PC-9 (cell line): ENCODE measurements at regions of chr19 and their contacts with region 1.

Region 1: DNA sequence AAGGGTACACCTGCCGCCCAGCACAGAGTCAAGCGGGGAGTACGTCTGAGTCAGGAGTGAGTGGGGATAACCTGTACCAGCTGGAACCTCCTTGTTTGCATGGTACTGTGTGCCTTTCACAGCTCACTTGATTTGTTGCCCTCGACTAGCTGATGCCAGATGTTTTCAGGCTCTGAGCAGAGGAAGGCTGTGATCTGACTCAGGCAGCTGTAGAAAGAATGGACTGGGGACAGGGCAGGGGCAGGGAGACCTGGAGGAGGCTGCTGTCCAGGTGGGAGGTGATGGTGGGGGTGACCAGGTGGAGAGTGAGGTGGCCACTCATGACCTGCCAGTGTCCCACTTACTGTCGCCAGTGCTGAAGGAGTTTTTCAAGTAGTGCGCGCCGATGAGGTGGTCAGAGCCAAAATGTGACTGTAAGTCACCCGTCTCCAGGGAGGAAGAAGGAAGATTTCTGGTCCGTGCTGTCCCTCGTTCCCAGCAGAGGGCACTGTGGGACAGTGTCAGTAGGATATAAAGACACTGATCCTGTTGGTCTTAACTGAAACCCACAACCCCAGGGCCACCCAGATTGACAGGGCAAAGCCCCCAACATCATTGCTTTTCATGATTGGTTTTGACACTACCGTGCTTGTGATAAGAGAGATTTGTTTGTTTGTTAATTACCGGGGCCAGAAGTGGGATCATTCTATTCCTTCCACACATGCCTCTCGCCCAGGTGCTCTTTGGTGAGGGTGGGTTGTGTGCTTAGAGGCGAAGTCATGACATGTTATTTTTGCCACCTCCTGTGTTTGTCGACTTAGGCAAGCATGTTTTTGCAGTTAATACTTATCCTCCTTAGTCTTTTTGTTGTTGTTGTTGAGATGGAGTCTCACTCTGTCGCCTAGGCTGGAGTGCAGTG is 128.4 kb downstream of the DPF1 start:
- DNase-seq: peak in 1 of 2 experiments; percentile 61
- H3K4me3 ChIP-seq: no peak overlapping the region
- H3K27ac ChIP-seq: no peak overlapping the region
- H3K4me1 ChIP-seq: no peaks in the 10 kb centered on the region
- H3K27me3 ChIP-seq: no peaks in the 10 kb centered on the region
- CTCF ChIP-seq: peak; percentile 74

Region 2: DNA sequence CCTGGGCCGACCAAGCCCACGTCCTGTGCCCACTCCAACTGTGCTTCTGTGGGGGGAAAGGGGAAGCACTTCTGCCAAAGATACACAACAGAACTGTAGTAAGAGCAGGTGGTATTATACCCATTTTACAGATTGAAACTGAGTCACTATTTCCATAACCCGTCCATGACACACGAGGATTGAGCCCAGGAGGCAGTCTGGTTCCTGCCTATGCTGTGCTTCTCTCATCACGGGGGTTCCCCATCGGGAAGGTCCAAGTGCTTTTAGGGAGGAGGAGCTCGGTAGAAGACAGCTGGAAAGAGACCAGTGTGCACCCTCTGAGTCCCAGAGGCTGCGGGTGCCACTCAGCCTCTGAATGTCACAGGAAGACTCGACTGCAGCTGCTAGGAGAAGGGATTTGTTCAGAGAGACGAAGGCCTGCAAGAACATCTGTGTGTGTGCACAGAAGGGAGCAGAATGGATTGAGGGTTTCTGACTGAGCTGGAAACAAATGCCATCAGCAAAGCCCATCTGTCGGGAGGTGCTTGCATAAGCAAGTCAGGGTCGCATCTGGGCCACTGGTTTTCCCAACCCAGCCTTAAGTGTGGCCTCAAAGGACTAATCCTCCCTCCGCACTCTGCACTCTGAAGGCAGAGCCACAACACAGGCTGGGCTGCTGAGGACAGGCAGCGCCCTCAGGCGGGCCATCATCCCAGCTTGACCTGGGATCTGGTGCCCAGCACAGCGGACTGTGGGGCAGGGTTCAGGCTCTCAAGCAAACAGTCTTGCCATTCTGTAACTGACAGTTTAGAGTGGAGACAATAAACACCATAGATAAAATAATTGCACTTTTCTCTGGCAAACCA is 21.6 kb before region 1 on chr19:
- CTCF ChIA-PET with region 1: interaction called, 13 read pairs
- POLR2A ChIA-PET with region 1: no interaction called
- intact Hi-C with region 1: no loop called
- DNase-seq: no peak
- H3K4me3 ChIP-seq: no peak overlapping the region
- H3K27ac ChIP-seq: no peak overlapping the region
- H3K4me1 ChIP-seq: peaks cover 12% of the 10 kb centered on the region
- H3K27me3 ChIP-seq: no peaks in the 10 kb centered on the region
- CTCF ChIP-seq: no peak